Panc1 (cell line): ENCODE measurements at regions of chr2 and their contacts with region 1.

Region 1: DNA sequence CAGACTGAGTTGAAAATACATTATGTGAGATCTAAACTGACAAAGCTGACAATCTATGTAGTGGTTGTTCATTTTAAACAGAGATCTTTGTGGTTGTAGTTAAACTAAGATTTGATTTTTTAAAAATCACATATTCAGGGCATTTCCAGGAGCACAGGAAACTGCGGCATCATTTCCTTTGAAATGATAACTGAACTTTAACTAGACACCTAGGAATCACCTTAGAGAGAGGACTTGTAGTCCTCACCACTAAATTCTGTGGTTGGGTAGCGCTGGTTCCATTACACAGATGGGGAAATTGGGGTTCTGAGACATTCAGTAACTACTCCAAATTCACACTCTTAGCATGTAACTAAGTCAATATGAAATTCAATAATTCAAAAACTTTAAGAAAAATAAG is 96.0 kb upstream of the TRIB2 start:
- DNase-seq: no peak
- ATAC-seq: no peak
- H3K4me3 ChIP-seq: no peak overlapping the region
- H3K27ac ChIP-seq: no peak overlapping the region; the same call in 1 of the 2 replicates
- H3K4me1 ChIP-seq: no peaks in the 10 kb centered on the region
- H3K27me3 ChIP-seq: no peaks in the 10 kb centered on the region
- CTCF ChIP-seq: no peak

Region 2: GRCh38 chr2:12168791-12169388 is 451.9 kb before region 1 on chr2:
- CTCF ChIA-PET with region 1: no interaction called
- POLR2A ChIA-PET with region 1: interaction called, 13 read pairs
- in situ Hi-C with region 1: no loop called
- intact Hi-C with region 1: no loop called
- DNase-seq: no peak
- ATAC-seq: peak; percentile 49; the same call in 1 of the 2 replicates
- H3K4me3 ChIP-seq: no peak overlapping the region
- H3K27ac ChIP-seq: peak overlapping the region; percentile 54
- H3K4me1 ChIP-seq: peaks cover 6% of the 10 kb centered on the region; the same call in 1 of the 2 replicates
- H3K27me3 ChIP-seq: no peaks in the 10 kb centered on the region
- CTCF ChIP-seq: no peak